ENCODE measurements at regions of chr15 and their contacts with region 1.

Region 1: DNA sequence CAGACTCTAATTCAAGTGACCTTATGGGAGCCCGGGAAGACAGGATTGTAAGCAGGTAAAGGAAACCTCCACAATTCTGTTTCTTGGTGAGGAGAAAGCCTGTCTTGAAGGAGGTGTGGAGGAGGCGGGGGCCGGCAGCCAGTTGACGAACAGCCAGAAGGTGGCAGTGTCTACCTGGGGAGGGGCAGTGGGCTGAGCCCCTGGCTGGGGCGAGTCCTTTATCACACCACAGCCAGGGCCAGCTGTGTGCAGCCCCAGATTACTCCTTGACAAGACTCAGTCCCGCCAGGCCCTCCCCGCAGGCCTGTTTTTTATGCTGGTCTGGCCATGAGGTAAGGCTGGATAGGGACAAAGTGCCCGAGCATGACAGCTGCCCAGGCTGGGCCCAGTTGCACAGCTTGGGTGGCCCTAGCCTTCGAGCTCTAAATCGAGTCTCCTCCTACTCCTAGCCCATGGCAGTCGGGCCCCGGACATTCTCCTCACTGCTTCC is 40.9 kb upstream of the IDH2 start:
- DNase-seq: peak; percentile 58 to 91
- H3K4me3 ChIP-seq: no peak overlapping the region
- H3K27ac ChIP-seq: no peak overlapping the region
- H3K4me1 ChIP-seq: no peaks in the 10 kb centered on the region; a peak in 3 of 7 replicates
- H3K27me3 ChIP-seq: no peaks in the 10 kb centered on the region
- CTCF ChIP-seq: peak; percentile 89 to 97 (median 93)
- EP300 ChIP-seq: no peak
- POLR2A ChIP-seq: no peak
- RAD21 ChIP-seq: peak; percentile 97 to 99

Region 2: DNA sequence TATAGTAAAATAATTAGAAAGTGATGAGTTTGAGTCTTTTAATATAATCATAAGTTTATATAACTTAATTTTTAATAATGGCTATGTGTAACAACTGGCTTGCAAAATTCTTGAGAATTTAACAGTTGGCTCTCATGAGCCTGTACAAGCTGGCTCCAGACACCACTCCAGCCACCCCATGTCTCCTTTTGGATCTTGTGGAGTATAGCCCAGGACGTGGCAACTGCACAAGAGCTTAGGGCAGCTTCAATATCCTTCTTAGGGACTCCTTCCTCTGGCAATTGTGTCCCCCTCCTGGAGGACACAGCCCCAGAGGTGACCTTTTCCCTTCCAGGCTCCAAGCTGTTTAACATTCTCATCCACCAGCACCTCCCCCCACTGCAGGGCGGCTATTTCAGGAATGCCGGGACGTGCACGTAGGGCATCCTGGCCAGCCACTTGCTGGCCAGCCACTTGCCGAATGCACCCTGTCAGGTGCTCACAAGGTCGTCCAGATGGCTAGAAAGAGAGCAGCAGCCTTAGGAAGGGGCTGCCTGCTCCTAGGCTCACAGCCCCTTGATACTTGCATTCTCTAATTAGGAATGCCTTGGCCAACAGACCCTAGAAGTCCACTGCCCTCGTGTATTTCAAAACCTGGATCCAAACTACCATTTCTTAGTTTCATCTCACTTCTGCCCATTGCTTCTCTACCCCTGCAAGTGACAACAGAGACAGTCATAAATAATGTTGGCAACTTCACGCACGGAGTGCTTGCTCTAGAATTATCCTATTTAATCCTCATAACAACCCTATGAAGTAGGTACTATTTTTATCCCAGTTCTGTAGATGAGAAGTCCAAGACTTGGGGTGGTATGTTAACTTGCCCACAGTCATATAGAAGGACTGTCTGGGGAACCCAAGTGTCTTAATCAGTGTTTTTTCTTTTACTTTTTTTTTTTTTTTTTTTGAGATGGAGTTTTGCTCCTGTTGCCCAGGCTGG is 16.5 kb before region 1 on chr15:
- CTCF ChIA-PET with region 1: interaction called, 15 read pairs
- POLR2A ChIA-PET with region 1: interaction called, 3 read pairs
- DNase-seq: peak in 1 of 2 experiments; percentile 71
- H3K4me3 ChIP-seq: 0 out of 8 replicates have a peak overlapping the region, but pooled peaks of 1 of the 4 experiments have one; percentile 6
- H3K27ac ChIP-seq: peak overlapping the region; percentile 4; the same call in 1 of the 2 replicates
- H3K4me1 ChIP-seq: peaks cover 0 to 8% (median 3%) of the 10 kb centered on the region in 4 experiments; a peak in 3 of 7 replicates
- H3K27me3 ChIP-seq: no peaks in the 10 kb centered on the region
- CTCF ChIP-seq: no peak
- EP300 ChIP-seq: peak in 1 of 2 experiments; percentile 67; a peak in 1 of 3 replicates
- POLR2A ChIP-seq: 0 out of 3 replicates have a peak, but pooled peaks of 1 of the 2 experiments have one; percentile 38
- RAD21 ChIP-seq: peak in 1 of 2 experiments; percentile 17; a peak in 2 of 4 replicates

Region 3: GRCh38 chr15:90191794-90192509 is 48.7 kb after region 1 on chr15:
- CTCF ChIA-PET with region 1: interaction called, 10 read pairs
- POLR2A ChIA-PET with region 1: no interaction called
- DNase-seq: no peak
- H3K4me3 ChIP-seq: no peak overlapping the region
- H3K27ac ChIP-seq: no peak overlapping the region
- H3K4me1 ChIP-seq: peaks cover 0 to 8% (median 5%) of the 10 kb centered on the region in 4 experiments; a peak in 6 of 7 replicates
- H3K27me3 ChIP-seq: no peaks in the 10 kb centered on the region
- CTCF ChIP-seq: no peak
- EP300 ChIP-seq: no peak
- POLR2A ChIP-seq: no peak
- RAD21 ChIP-seq: no peak

Region 4: DNA sequence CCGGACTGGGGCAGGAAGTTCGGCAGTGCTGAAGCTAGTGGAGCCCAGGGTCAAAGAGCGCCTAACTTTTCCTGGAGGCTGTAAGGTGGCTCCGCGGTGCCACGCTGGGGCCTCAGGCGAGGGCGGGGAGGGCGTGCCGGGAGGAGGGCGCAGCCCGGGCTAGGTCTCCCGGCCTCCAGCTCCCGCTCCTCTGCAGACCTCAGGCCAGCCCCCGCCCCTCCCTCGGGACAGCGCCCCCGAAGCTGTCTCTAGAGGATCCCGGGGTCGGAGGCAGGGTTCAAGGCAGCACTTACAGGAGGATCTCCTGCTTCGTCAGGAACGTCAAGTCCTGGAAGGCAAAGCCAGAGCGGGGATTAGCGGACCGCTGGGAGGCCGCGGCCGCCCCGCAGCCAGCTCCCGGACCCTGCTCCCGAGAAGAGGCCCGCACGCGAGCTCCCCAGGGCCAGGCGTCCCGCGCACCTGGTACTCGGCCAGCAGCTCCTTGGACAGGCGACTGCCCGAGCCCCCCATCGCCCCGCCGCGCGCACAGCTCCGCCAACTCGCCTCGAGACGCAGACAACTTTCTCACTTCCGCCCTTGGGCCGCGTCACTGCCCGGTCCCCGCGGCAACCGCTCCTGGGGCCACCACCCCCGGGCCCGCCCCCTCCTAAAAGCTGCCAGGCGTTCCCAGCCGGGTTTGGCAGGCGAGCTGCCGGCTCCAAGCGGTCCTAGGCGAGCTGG is 90.3 kb after region 1 on chr15 and contains the start of gene CIB1:
- CTCF ChIA-PET with region 1: interaction called, 47 read pairs
- POLR2A ChIA-PET with region 1: interaction called, 3 read pairs
- DNase-seq: peak; percentile 76 to 94
- H3K4me3 ChIP-seq: peak within 1 kb of the TSS; percentile 57 to 76 (median 73)
- H3K27ac ChIP-seq: no peak within 1 kb of the TSS
- H3K4me1 ChIP-seq: peaks cover 0 to 6% (median under 1%) of the 10 kb centered on the region in 4 experiments; a peak in 4 of 7 replicates
- H3K27me3 ChIP-seq: no peaks in the 10 kb centered on the region
- CTCF ChIP-seq: peak in 2 of 3 experiments; percentile 71 to 76; a peak in 3 of 4 replicates
- EP300 ChIP-seq: no peak
- POLR2A ChIP-seq: peak in 1 of 2 experiments; percentile 67; a peak in 2 of 3 replicates
- RAD21 ChIP-seq: no peak
- total RNA-seq, gene CIB1: 26.0 and 29.1 TPM in 2 replicates

Region 5: DNA sequence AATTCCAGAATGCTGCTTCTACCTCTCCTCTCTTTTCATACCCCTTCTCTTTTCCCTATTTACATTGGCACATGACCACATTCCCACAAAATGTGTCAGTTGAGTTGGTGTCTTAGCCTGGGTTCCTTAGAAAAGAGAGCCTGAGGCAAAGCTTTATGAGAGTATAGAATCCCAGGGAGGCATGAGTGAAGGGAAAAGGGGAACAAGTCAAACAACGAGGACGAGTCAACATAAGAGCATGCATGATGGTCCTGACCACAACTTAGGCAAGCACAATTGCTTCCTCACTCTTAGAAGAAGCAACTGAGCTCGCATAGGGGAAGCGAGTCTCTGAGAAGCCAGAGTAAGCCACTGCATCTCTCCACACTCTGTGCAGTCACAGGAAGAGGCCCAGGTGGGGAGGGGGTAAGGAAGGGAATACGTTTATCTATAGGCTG is 193.5 kb after region 1 on chr15:
- CTCF ChIA-PET with region 1: no interaction called
- POLR2A ChIA-PET with region 1: no interaction called
- DNase-seq: no peak
- H3K4me3 ChIP-seq: no peak overlapping the region
- H3K27ac ChIP-seq: no peak overlapping the region
- H3K4me1 ChIP-seq: no peaks in the 10 kb centered on the region
- H3K27me3 ChIP-seq: no peaks in the 10 kb centered on the region
- CTCF ChIP-seq: no peak
- EP300 ChIP-seq: no peak
- POLR2A ChIP-seq: no peak
- RAD21 ChIP-seq: no peak